CD8-positive, alpha-beta T cell (primary cell): ENCODE measurements at regions of chr15 and their contacts with region 1.

Region 1: DNA sequence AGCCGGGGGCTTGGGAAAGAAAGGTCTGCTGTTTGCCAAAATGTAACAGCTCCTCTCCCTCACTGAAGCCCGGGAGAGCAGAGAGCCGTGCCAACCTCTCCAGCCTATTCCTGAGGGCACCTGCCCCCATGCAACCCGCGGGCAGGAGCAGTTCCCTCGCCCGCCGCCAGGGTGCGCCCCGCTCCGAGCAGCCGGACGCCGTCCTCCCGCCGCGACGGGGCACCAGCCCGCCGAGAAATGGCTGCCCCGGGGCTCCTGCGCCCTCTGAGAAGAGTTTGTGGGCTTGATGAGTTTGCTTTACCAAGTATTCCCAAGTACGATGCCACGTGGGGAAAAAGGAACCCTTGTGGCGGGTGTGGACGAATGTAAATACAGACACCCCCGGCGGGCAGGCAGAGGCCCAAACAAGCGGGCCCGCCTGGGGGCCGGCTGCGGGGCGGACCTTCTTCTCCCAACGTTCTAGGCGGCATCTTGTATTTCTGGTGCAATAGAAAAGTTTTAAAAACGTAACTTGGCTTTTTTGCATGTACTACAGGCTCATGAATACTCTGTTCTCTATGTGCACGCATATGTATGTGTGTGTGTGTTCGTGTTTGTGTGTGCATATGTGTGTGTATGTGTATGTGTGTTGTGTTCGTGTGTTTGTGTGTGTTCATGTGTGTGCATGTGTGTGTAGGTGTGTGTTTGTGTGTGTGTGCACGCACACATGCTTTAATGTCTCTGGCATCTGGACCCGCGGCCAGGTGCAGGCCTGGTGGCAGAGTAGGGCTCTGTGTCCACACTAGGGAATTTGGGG is 162.9 kb downstream of the CHSY1 start:
- DNase-seq: peak; percentile 64 to 89 (median 76)
- ATAC-seq: peak; percentile 98
- H3K4me3 ChIP-seq: no peak overlapping the region
- H3K4me3 Mint-ChIP-seq: no peak overlapping the region
- H3K27ac ChIP-seq: no peak overlapping the region
- H3K27ac Mint-ChIP-seq: no peak overlapping the region
- H3K4me1 ChIP-seq: no peaks in the 10 kb centered on the region
- H3K4me1 Mint-ChIP-seq: peaks cover 1% of the 10 kb centered on the region
- H3K27me3 ChIP-seq: no peaks in the 10 kb centered on the region
- H3K27me3 Mint-ChIP-seq: no peaks in the 10 kb centered on the region
- CTCF ChIP-seq: peak; percentile 98

Region 2: DNA sequence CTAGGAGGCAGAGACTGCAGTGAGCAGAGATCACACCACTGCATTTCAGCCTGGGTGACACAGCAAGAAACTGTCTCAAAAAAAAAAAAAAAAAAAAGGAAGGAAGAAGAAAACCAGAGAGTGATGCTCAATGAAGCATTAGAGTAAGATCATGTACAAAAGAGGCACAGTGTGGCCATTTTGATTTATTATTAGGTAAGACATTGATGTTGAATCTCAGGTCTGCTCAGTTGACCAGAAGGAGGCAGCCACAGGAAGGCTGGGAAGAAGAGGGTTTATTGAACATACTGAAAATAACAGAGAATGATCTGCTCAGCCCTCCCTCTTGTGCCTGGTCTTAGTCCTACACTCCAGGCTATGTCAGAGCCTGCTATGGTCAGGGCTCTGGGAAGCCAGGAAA is 154.3 kb before region 1 on chr15:
- CTCF ChIA-PET with region 1: no interaction called
- POLR2A ChIA-PET with region 1: no interaction called
- intact Hi-C with region 1: no loop called
- DNase-seq: no peak
- ATAC-seq: no peak
- H3K4me3 ChIP-seq: no peak overlapping the region
- H3K4me3 Mint-ChIP-seq: no peak overlapping the region
- H3K27ac ChIP-seq: no peak overlapping the region
- H3K27ac Mint-ChIP-seq: no peak overlapping the region
- H3K4me1 ChIP-seq: no peaks in the 10 kb centered on the region
- H3K4me1 Mint-ChIP-seq: no peaks in the 10 kb centered on the region
- H3K27me3 ChIP-seq: no peaks in the 10 kb centered on the region
- H3K27me3 Mint-ChIP-seq: peaks cover 15% of the 10 kb centered on the region
- CTCF ChIP-seq: no peak

Region 3: GRCh38 chr15:101014921-101015841 is 73.8 kb before region 1 on chr15:
- CTCF ChIA-PET with region 1: interaction called, 7 read pairs
- POLR2A ChIA-PET with region 1: no interaction called
- intact Hi-C with region 1: loop called (anchors 2 to 5 kb)
- DNase-seq: peak; percentile 17 to 78 (median 68)
- ATAC-seq: peak; percentile 42
- H3K4me3 ChIP-seq: no peak overlapping the region
- H3K4me3 Mint-ChIP-seq: no peak overlapping the region
- H3K27ac ChIP-seq: no peak overlapping the region
- H3K27ac Mint-ChIP-seq: no peak overlapping the region
- H3K4me1 ChIP-seq: no peaks in the 10 kb centered on the region
- H3K4me1 Mint-ChIP-seq: no peaks in the 10 kb centered on the region
- H3K27me3 ChIP-seq: no peaks in the 10 kb centered on the region
- H3K27me3 Mint-ChIP-seq: peaks cover 9% of the 10 kb centered on the region
- CTCF ChIP-seq: peak; percentile 73

Region 4: GRCh38 chr15:101124731-101125451 is 35.9 kb after region 1 on chr15:
- CTCF ChIA-PET with region 1: interaction called, 3 read pairs
- POLR2A ChIA-PET with region 1: no interaction called
- intact Hi-C with region 1: loop called in 1 of 2 experiments (anchors 2 kb)
- DNase-seq: peak in 1 of 9 experiments; percentile 40
- ATAC-seq: no peak
- H3K4me3 ChIP-seq: no peak overlapping the region
- H3K4me3 Mint-ChIP-seq: no peak overlapping the region
- H3K27ac ChIP-seq: peak overlapping the region in 1 of 2 experiments; percentile 1
- H3K27ac Mint-ChIP-seq: no peak overlapping the region
- H3K4me1 ChIP-seq: peaks cover 32% of the 10 kb centered on the region
- H3K4me1 Mint-ChIP-seq: peaks cover 46% of the 10 kb centered on the region
- H3K27me3 ChIP-seq: no peaks in the 10 kb centered on the region
- H3K27me3 Mint-ChIP-seq: no peaks in the 10 kb centered on the region
- CTCF ChIP-seq: no peak

Region 5: DNA sequence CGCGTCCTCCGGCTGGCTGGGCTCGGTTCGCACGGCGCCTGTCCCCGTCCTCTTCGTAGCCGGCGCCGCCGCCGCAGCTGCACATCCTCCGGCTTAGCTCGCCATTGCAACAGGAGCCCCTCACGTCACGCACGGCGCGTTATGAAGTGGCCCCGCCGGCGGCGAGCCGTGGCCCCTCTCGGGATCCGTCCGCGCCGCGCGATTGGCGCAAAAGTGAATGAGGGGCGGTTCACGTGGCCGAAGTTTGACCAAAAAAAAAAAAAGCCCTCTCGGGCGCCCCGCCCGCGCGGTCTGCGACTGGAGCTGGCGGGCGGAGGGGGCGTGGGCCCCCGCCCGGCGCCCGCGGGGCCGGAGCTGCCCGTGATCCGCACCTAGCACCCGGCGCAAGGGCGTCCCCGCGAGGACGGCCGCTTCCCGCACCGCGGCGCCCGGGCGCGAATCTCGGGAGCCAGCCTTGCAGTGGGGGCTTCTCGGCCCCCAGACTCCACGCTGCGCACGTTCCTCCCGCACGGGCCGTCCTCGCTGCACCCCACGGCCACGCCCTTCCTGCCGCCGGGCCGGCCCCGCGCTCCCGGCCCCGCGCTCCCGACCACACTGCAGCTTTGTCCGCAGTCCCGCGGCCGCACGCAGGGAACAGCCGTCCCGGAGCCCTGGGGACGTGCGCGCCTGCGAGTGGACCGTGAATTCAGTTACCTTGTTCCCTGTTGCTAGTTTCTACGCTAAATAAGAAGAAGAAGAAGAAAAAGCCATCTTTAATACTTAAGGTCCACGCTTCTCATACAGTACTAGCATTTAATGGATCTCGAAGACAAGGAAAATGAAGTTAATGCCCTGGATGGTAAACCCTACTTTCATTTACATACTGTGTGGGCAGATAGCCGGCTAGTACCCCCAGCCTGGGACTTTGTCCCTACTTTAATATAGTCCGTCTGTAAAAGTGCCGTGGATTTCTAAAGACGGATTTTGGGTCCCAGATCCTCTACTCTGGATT is 163.1 kb after region 1 on chr15 and contains the start of gene CHSY1:
- CTCF ChIA-PET with region 1: interaction called, 173 read pairs
- POLR2A ChIA-PET with region 1: no interaction called
- intact Hi-C with region 1: loop called in 1 of 2 experiments (anchors 2 kb)
- DNase-seq: peak; percentile 64 to 94 (median 86)
- ATAC-seq: peak; percentile 81
- H3K4me3 ChIP-seq: peak within 1 kb of the TSS; percentile 63 to 72
- H3K4me3 Mint-ChIP-seq: peak within 1 kb of the TSS; percentile 93
- H3K27ac ChIP-seq: peak within 1 kb of the TSS; percentile 35 to 48
- H3K27ac Mint-ChIP-seq: peak within 1 kb of the TSS; percentile 90
- H3K4me1 ChIP-seq: peaks cover 25% of the 10 kb centered on the region
- H3K4me1 Mint-ChIP-seq: peaks cover 41% of the 10 kb centered on the region
- H3K27me3 ChIP-seq: no peaks in the 10 kb centered on the region
- H3K27me3 Mint-ChIP-seq: no peaks in the 10 kb centered on the region
- CTCF ChIP-seq: no peak
- total RNA-seq, gene CHSY1: 15.4 to 15.6 TPM

Region 6: GRCh38 chr15:101646672-101647071 is 557.7 kb after region 1 on chr15:
- CTCF ChIA-PET with region 1: no interaction called
- POLR2A ChIA-PET with region 1: no interaction called
- intact Hi-C with region 1: loop called in 1 of 2 experiments (anchors 5 kb)
- DNase-seq: no peak
- ATAC-seq: no peak
- H3K4me3 ChIP-seq: no peak overlapping the region
- H3K4me3 Mint-ChIP-seq: no peak overlapping the region
- H3K27ac ChIP-seq: no peak overlapping the region
- H3K27ac Mint-ChIP-seq: no peak overlapping the region
- H3K4me1 ChIP-seq: peaks cover 25% of the 10 kb centered on the region
- H3K4me1 Mint-ChIP-seq: peaks cover 56% of the 10 kb centered on the region
- H3K27me3 ChIP-seq: no peaks in the 10 kb centered on the region
- H3K27me3 Mint-ChIP-seq: no peaks in the 10 kb centered on the region
- CTCF ChIP-seq: no peak